Left colon (tissue), 2 donors: ENCODE measurements at regions of chr22 and their contacts with region 1.

Region 1: GRCh38 chr22:36546092-36546804 is 17.3 kb upstream of the EIF3D start:
- DNase-seq: peak in 1 of 2 donors; percentile 35
- ATAC-seq: peak; percentile 63

Region 2: GRCh38 chr22:36734171-36735058 is 188.2 kb after region 1 on chr22:
- intact Hi-C with region 1: no loop called
- DNase-seq: no peak
- ATAC-seq: no peak

Region 3: DNA sequence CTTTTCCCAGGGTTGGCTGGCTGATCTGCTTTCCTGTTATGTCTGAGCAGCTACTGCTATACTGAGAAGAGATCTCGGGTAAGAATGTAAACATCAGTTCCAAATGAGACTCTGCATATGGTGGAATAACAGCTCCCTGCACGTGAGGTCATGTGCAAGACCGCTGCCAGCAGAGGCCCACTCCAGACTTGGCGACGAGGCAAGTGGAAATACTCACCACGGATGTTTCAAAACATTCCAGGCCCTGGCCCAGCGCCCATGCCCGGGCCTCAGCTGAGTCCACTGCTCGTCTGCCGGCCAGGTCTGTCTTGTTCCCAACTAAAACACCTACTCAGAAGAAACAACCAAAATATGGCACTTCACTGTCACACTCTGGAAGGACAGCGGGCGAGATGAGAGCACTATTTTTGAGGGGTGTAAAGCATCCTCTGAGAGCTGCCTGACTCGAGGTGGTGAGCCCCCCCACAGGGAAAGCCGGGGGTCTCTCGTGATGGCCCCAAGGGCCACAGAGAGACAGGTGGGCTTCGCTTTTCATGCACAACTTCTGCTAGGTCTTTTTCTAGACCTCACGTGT is 216.5 kb after region 1 on chr22:
- intact Hi-C with region 1: loop called in 1 of 2 experiments (anchors 10 kb)
- DNase-seq: peak; percentile 42 to 62
- ATAC-seq: no peak